ENCODE measurements at regions of chr12 and their contacts with region 1.

Region 1: DNA sequence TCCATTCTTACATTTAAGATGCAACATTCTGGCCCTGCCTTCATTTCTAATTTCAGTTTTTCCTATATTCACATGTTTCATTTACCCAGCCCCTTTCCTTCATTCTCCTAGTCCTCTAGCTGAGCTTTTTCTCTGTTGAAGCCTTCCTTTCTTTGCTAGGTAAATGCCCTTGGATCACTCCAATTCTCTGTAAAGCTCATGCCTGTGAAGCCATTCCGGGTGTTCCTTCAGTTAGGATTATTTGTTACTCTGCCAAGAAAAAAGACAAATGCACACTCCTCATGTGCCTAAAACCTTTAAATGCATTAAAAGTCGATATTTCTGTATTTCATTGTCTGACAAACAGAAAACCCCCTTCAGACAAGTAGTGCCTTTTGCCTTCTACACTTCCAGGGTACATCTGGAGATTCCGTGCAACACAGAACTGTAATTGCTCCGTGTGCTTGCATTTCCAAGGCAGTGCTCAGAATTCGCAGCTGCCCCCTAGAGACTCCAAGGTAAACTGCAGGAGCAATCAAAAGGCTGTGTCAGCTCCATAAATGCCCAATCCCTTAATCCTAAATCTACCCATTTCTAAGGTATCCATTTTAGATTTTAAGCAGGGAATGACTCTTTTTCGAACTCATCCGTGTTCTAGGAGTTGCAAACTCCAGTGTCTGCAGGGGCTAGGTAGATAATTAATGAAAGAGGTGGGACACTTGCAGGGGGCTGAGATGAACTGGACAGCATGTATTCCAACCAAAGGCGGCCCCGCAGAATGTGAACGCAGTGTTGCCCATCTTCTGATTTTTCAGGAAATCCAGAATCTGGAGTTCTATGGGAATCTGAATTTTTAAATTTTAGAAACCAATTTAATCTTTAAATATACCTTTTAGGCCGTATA is 320.2 kb downstream of the GRIN2B start:
- DNase-seq: no peak
- H3K4me3 ChIP-seq: no peak overlapping the region
- H3K27ac ChIP-seq: no peak overlapping the region
- H3K4me1 ChIP-seq: no peaks in the 10 kb centered on the region
- H3K27me3 ChIP-seq: no peaks in the 10 kb centered on the region
- CTCF ChIP-seq: peak in 2 of 3 experiments; percentile 50 to 62
- POLR2A ChIP-seq: no peak

Region 2: DNA sequence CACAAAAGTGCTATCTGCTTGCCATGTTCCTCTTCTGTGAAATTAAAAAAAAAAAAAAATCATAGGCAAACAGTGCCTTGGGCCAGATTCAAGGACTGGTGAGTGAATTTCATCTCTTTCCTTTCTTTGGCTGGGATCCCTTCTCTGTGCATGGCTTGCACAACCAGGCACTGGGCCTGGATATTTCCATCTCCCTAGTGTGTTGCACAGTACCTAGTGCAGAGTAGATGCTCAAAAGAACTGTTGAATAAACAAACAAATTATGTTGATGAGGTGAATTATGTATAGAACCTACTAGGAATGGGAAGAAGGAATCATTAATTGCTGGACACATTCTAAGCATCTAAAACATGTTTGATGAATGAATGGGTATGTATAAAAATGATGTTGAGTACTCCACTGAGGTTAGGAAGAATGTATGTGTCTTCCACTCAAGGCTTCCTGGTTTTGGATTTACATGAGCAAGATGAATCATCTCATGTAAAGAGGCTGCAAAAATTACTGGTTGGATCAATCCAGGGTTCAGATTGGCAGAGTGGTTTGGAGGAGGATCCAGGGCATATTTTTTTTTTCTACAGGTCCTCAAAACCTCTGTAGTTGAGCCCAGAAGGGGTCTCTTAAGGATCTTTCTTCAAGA is 371.5 kb before region 1 on chr12:
- intact Hi-C with region 1: loop called (anchors 10 kb)
- DNase-seq: no peak
- H3K4me3 ChIP-seq: no peak overlapping the region
- H3K27ac ChIP-seq: no peak overlapping the region
- H3K4me1 ChIP-seq: no peaks in the 10 kb centered on the region
- H3K27me3 ChIP-seq: no peaks in the 10 kb centered on the region
- CTCF ChIP-seq: no peak
- POLR2A ChIP-seq: no peak

Region 3: DNA sequence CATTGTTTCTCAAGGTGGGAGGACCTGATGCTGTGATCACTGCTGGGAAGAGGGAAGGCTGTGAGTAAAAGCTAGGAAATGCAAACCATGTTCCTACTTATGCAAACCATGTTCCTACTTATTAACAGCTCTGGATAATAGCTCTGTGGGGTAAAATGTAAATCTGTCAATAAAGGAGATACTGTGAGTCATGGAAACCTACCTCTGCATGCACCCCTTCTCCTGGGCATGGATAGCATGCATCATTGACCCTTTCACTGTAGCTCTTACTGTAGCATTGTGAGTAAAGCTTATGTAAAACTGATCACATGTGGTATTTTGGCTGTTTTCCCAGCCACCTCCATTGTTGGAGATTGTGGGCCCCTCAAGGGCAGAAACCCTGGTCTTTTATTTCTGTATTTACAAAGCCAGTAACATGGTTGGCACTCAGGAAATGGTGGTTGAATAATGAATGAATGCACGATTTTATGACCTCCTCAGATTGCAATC is 66.5 kb after region 1 on chr12:
- intact Hi-C with region 1: no loop called
- DNase-seq: no peak
- H3K4me3 ChIP-seq: no peak overlapping the region
- H3K27ac ChIP-seq: no peak overlapping the region
- H3K4me1 ChIP-seq: no peaks in the 10 kb centered on the region
- H3K27me3 ChIP-seq: no peaks in the 10 kb centered on the region
- CTCF ChIP-seq: no peak
- POLR2A ChIP-seq: no peak

Measured in vagina (tissue), 2 donors.